ENCODE measurements at regions of chr2 and their contacts with region 1.

Region 1: GRCh38 chr2:224838335-224838734 is 122.2 kb upstream of the CCDC195 start:
- DNase-seq: no peak
- ATAC-seq: no peak
- H3K4me3 ChIP-seq: no peak overlapping the region
- H3K4me3 Mint-ChIP-seq: no peak overlapping the region
- H3K27ac ChIP-seq: no peak overlapping the region
- H3K27ac Mint-ChIP-seq: no peak overlapping the region
- H3K4me1 ChIP-seq: no peaks in the 10 kb centered on the region
- H3K4me1 Mint-ChIP-seq: no peaks in the 10 kb centered on the region
- H3K27me3 ChIP-seq: no peaks in the 10 kb centered on the region
- H3K27me3 Mint-ChIP-seq: no peaks in the 10 kb centered on the region
- CTCF ChIP-seq: no peak

Region 2: GRCh38 chr2:224601923-224602322 is 236.4 kb before region 1 on chr2:
- CTCF ChIA-PET with region 1: no interaction called
- POLR2A ChIA-PET with region 1: no interaction called
- intact Hi-C with region 1: loop called in 1 of 2 experiments (anchors 2 kb)
- DNase-seq: no peak
- ATAC-seq: no peak
- H3K4me3 ChIP-seq: no peak overlapping the region
- H3K4me3 Mint-ChIP-seq: no peak overlapping the region
- H3K27ac ChIP-seq: no peak overlapping the region
- H3K27ac Mint-ChIP-seq: no peak overlapping the region
- H3K4me1 ChIP-seq: peaks cover 5% of the 10 kb centered on the region
- H3K4me1 Mint-ChIP-seq: peaks cover 12% of the 10 kb centered on the region
- H3K27me3 ChIP-seq: no peaks in the 10 kb centered on the region
- H3K27me3 Mint-ChIP-seq: peaks cover 10% of the 10 kb centered on the region
- CTCF ChIP-seq: no peak

Measured in CD4-positive, alpha-beta T cell (primary cell).